Right ventricle myocardium superior (tissue), 1 donor: ENCODE measurements at regions of chr1 and their contacts with region 1.

Region 1: DNA sequence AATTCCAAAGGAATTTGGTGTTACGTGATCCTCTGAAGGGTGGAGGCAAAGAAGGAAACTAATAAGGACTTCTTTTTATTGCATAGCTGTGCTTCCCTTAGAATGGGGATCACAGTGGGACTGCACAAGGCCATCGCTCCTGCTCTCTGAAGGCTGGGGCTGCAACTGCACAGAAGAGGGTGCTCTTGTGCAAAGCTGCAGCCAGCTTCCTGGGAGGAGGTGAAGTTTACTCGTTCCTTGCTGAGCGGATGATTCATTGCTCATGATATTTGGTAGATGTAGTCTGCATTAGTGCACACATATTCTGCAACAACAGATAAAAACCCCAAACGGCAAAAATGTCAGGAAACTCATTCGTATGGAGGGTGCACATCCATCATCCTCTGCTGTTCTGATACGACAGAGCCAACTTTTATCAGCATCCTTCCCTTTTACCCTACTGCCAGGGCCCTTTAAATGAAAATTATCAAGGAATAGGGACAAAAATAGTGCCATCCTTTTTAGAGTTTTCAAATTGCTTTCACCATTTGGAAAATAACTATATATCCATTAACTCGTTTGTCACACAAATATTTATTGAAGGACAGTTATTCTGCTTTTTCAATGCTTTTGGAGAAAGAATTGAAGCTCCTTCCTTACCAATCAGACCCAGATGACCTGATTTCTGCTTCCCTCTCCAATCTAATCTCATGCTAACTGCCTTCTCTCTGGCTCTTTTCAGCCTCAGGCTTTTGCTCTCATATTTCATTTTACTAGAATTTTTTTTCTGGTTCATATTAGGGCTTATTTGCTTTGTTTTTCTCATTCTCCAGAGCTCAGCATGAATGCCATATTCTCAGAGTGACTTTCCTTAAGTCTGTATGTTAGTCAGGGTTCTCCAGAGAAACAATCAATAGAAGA is 263.6 kb downstream of the DUSP10 start:
- DNase-seq: peak; percentile 69
- ATAC-seq: peak; percentile 93

Region 2: DNA sequence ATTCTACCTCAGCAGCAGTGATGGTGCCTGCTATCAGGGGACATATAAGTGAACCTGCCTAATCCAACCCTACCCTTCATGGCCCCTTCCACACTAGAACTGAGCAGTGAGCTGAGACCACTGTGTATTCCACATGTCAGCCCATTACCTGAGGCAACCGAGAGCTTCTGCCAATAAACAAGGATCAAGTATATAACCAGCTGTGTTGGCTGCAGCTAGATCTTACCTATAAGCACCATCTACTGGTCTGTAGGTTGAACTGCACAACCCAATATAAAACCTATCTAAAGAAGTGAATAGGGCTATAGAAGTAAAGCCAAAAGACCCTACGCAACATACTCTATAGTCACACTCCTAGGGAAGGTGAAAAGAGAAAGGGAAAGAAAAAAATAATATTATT is 692.7 kb after region 1 on chr1:
- intact Hi-C with region 1: loop called (anchors 10 kb)
- DNase-seq: no peak
- ATAC-seq: peak; percentile 61

Region 3: GRCh38 chr1:222455188-222455879 is 977.0 kb after region 1 on chr1:
- intact Hi-C with region 1: loop called (anchors 10 kb)
- DNase-seq: peak; percentile 89
- ATAC-seq: peak; percentile 98